WTC11 (cell line): ENCODE measurements at regions of chr17 and their contacts with region 1.

Region 1: DNA sequence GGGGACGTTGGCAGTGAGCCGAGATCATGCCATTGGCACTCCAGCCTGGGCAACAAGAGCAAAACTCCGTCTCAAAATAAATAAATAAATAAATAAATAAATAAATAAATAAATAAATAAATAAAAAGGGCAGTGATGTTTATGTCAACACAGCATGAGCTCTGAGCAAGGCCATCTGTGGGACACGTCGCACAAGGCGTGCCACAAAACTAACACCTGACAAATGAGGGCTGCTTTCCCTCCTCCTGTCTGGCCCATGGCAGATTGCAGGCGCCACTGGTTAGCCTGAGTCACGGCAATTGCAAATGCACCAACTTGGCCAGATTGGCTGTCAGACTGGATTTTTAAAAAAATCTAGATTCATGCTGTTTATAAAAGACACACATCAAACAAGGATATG is 25.9 kb upstream of the SPNS3 start:
- DNase-seq: no peak
- ATAC-seq: no peak
- H3K4me3 Mint-ChIP-seq: no peak overlapping the region
- H3K27ac Mint-ChIP-seq: peak overlapping the region; percentile 67; the same call in 1 of the 2 replicates
- H3K4me1 Mint-ChIP-seq: peaks cover 13% of the 10 kb centered on the region
- H3K27me3 Mint-ChIP-seq: no peaks in the 10 kb centered on the region
- CTCF ChIP-seq: no peak

Region 2: DNA sequence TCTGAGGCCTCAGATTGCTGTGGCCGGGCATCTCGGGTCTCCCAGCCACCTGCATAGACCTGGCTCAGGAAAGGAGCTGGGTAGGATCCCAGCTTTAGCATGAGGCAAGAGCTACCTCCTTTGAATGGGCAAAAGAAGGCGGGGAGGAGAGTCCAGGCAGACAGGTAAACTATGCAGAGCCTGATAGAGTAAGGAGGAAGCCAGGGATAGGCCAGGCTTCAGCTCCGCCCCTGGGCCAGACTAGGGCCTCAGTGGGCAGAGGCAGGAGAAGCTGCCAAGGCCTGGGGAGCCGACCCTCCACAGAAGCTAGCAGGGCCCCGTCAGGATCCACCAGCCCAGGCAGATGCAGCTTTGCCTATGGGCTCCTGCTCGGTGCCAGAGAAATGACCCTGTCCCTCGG is 18.8 kb before region 1 on chr17:
- CTCF ChIA-PET with region 1: interaction called, 15 read pairs
- POLR2A ChIA-PET with region 1: no interaction called
- DNase-seq: peak; percentile 55
- ATAC-seq: peak; percentile 98
- H3K4me3 Mint-ChIP-seq: no peak overlapping the region
- H3K27ac Mint-ChIP-seq: peak overlapping the region; percentile 78
- H3K4me1 Mint-ChIP-seq: peaks cover 34% of the 10 kb centered on the region
- H3K27me3 Mint-ChIP-seq: no peaks in the 10 kb centered on the region
- CTCF ChIP-seq: no peak